ENCODE measurements at regions of chr19 and their contacts with region 1.

Region 1: DNA sequence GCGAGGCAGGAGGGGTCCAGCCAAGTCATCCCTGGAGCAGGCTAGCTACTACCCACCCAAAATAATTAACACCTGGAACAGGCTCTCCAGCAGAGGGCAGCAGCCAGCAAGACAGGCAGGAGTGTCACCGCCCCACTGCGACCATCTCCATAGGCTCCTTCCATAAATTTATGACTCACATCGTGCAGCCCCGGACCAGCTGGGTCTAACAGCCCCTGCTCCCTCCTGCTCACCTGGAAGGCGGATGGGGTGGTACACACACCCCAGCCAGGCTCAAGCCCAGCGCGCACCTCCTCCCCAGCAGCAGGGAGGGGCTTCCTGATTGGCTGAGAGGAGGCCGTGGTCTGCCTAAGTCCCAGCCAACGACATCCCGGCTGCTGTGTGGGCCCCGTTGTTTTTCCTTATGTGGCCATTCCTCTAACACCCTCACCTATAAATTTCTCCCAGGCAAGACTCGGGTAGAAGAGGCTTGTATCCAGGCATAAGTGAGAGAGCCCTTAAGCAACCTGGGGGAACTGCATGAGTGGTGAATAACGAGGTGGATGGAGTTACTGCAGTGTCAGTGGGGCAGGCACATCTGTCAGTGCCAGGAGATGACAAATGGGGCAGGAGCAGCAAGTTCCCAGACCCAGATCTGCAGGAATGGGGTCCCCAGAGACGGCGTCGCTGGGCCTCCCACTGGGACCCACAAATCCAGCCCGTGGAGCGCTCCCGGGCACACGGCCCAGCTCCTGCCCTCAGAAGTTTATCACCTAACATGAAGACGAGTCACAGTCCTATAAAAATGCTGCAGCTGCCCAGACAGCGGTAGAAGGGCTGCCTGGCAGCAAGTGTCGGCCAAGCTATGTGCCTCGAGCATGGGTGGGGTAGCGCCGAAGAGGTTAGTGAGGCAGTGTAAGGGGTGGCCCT is 43.1 kb downstream of the CEBPG start:
- DNase-seq: peak; percentile 86
- H3K4me3 ChIP-seq: no peak overlapping the region
- H3K4me3 Mint-ChIP-seq: no peak overlapping the region
- H3K27ac Mint-ChIP-seq: no peak overlapping the region
- H3K4me1 ChIP-seq: peaks cover 4% of the 10 kb centered on the region; the same call in 1 of the 2 replicates
- H3K4me1 Mint-ChIP-seq: peaks cover 5% of the 10 kb centered on the region
- H3K27me3 ChIP-seq: no peaks in the 10 kb centered on the region
- H3K27me3 Mint-ChIP-seq: no peaks in the 10 kb centered on the region
- CTCF ChIP-seq: peak; percentile 77 to 82

Region 2: GRCh38 chr19:33373701-33374421 is 42.7 kb before region 1 on chr19 and contains the start of gene CEBPG:
- CTCF ChIA-PET with region 1: no interaction called
- POLR2A ChIA-PET with region 1: no interaction called
- intact Hi-C with region 1: no loop called
- DNase-seq: peak; percentile 66 to 90
- H3K4me3 ChIP-seq: peak within 1 kb of the TSS; percentile 65
- H3K4me3 Mint-ChIP-seq: peak within 1 kb of the TSS; percentile 93
- H3K27ac Mint-ChIP-seq: peak within 1 kb of the TSS; percentile 95
- H3K4me1 ChIP-seq: peaks cover 28% of the 10 kb centered on the region
- H3K4me1 Mint-ChIP-seq: peaks cover 26% of the 10 kb centered on the region
- H3K27me3 ChIP-seq: no peaks in the 10 kb centered on the region
- H3K27me3 Mint-ChIP-seq: no peaks in the 10 kb centered on the region
- CTCF ChIP-seq: peak; percentile 22 to 62
- total RNA-seq, gene CEBPG: 74.9 and 79.4 TPM in 2 replicates

Region 3: DNA sequence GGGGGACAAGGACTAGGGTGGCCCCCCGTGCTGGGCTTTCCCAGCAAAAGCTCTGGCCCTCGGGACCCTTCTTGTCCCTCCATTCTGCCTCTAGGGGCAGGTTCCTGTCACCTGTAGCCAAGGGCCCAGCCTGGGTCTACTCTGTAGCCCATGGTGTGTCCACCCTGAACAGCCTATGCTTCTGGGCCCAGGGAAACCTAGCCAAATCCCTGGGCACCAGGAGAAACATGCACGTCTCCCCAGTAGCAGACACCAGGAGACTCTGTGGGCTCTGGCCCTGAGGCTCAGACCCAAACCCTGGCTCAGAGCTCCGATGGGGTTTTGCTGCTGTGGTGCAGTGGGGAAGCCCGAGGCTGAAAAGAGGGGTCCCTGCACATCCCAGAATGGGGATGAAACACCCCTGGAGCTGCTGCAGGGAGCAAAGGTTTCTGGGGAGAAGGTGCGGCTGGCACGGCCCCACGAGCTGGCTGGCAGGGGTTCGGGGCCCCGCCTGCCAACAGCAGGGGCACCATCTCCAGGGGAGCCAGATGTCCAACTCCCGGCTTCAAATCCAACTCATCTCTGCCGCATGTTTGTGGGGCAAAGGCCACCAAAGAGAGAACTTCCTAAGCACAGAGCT is 24.8 kb before region 1 on chr19:
- CTCF ChIA-PET with region 1: no interaction called
- POLR2A ChIA-PET with region 1: no interaction called
- intact Hi-C with region 1: no loop called
- DNase-seq: no peak
- H3K4me3 ChIP-seq: no peak overlapping the region
- H3K4me3 Mint-ChIP-seq: no peak overlapping the region
- H3K27ac Mint-ChIP-seq: no peak overlapping the region
- H3K4me1 ChIP-seq: no peaks in the 10 kb centered on the region
- H3K4me1 Mint-ChIP-seq: peaks cover 5% of the 10 kb centered on the region
- H3K27me3 ChIP-seq: no peaks in the 10 kb centered on the region
- H3K27me3 Mint-ChIP-seq: no peaks in the 10 kb centered on the region
- CTCF ChIP-seq: no peak

Region 4: DNA sequence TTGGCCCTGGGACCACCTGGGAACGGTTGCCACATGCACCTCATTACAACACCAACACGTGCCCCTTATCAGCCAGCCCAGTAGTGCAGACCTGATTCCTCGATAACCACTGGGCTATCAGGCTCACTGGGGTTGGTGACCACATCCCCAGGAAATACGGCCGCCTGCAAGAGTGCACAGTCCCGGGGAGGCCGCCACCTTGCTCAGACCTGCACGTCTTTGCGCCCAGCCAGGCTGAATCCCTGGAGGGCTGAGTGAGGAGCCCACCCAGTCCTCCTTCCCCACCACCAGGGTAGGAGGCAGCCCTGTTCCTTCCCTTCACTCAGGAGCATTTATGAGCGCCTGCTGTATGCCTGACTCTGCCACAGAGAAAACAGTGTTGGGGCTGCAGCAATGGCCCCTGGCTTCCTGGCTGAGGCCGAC is 24.7 kb after region 1 on chr19:
- CTCF ChIA-PET with region 1: no interaction called
- POLR2A ChIA-PET with region 1: no interaction called
- intact Hi-C with region 1: no loop called
- DNase-seq: no peak
- H3K4me3 ChIP-seq: no peak overlapping the region
- H3K4me3 Mint-ChIP-seq: no peak overlapping the region
- H3K27ac Mint-ChIP-seq: no peak overlapping the region
- H3K4me1 ChIP-seq: no peaks in the 10 kb centered on the region
- H3K4me1 Mint-ChIP-seq: no peaks in the 10 kb centered on the region
- H3K27me3 ChIP-seq: no peaks in the 10 kb centered on the region
- H3K27me3 Mint-ChIP-seq: no peaks in the 10 kb centered on the region
- CTCF ChIP-seq: no peak

Region 5: DNA sequence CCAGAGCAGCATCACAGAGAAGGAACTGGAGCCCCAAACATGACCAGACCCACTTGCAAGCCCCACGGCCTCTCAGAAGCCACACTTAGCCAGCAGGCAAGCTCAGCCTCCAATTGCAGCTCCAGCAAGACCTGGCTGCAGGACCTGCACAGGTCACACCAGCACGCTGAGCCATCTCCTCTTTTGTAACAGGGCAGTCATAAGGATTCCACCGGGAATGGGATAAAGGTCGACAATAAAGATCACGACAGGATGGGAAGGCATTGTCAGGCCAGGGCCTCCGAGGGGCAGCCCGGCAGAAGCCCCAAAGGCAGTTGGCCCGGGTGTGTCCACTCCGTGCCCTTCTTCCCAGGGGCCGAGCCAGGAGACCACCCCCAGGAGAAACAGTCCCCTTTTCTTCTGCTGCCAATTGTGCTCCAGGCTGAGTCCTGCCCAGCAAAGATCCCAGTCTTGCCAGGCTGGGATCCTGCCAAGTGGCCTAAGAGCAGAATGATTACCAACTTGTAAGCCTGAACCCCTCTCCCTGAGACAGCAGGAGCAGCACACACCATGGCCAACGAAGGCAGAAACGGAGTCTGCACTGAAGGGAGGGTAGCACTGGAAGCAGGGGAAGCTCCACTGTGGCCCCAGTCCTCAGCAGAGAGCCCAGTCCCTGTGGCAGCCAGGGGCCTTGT is 92.5 kb after region 1 on chr19:
- CTCF ChIA-PET with region 1: no interaction called
- POLR2A ChIA-PET with region 1: no interaction called
- intact Hi-C with region 1: no loop called
- DNase-seq: no peak
- H3K4me3 ChIP-seq: no peak overlapping the region
- H3K4me3 Mint-ChIP-seq: no peak overlapping the region
- H3K27ac Mint-ChIP-seq: no peak overlapping the region
- H3K4me1 ChIP-seq: no peaks in the 10 kb centered on the region
- H3K4me1 Mint-ChIP-seq: no peaks in the 10 kb centered on the region
- H3K27me3 ChIP-seq: no peaks in the 10 kb centered on the region
- H3K27me3 Mint-ChIP-seq: no peaks in the 10 kb centered on the region
- CTCF ChIP-seq: no peak

Region 6: DNA sequence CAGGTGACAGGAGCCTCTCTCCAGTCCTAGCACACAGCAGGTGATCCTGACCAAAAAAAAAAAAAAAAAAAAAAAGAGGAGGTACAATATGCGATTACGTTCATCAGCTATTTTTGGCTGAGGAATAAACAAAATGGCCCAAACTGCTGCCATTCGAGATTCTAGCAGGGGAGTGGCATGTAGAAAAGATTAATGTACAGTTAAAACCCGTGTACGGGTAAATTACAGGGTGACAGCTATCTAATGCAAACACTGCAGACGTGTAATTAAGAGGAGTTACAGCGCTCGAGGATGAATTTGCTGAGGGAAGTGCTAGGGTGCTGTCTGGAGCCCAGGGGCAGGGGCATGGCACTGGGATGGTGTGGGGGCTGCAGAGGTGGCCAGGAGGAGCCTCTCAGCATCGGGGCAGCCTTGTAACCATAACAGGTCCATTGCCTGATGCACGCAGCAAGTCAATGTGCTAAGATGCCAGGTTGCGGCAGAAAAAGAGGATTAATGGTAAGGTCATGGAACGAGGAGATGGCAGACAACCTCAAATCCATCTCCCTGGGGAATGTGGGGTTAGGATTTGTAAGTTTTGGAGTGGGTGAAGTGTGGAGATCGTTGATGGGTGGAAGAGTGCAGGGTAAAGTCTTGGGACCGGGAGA is 222.6 kb after region 1 on chr19:
- CTCF ChIA-PET with region 1: no interaction called
- POLR2A ChIA-PET with region 1: no interaction called
- intact Hi-C with region 1: loop called (anchors 10 kb)
- DNase-seq: no peak
- H3K4me3 ChIP-seq: no peak overlapping the region
- H3K4me3 Mint-ChIP-seq: no peak overlapping the region
- H3K27ac Mint-ChIP-seq: no peak overlapping the region
- H3K4me1 ChIP-seq: no peaks in the 10 kb centered on the region
- H3K4me1 Mint-ChIP-seq: no peaks in the 10 kb centered on the region
- H3K27me3 ChIP-seq: no peaks in the 10 kb centered on the region
- H3K27me3 Mint-ChIP-seq: peaks cover 32% of the 10 kb centered on the region
- CTCF ChIP-seq: no peak